WTC11 (cell line): ENCODE measurements at regions of chr2 and their contacts with region 1.

Region 1: DNA sequence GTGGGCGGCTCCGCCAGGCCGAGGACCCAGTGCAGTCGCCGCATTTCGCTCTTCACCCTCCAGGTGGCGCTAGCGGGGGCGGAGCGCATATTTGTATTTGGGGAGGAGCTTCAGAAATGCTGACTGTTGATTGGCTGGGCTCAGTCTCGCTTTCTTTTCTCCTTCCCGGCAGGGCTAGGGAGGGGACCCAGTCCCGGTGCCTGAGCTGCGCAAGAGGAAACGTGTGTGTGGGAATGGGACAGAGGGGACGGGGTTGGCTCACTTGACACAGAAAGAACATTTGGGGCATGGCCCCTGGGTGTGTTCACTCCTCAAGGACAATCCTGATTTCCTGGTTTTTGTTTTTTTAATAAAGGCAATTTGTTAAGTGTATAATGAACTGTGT is 20.3 kb upstream of the DNMT3A start:
- DNase-seq: peak; percentile 98
- ATAC-seq: peak; percentile 97
- H3K4me3 Mint-ChIP-seq: peak overlapping the region; percentile 56
- H3K27ac Mint-ChIP-seq: no peak overlapping the region
- H3K4me1 Mint-ChIP-seq: peaks cover 10% of the 10 kb centered on the region
- H3K27me3 Mint-ChIP-seq: peaks cover 68% of the 10 kb centered on the region
- CTCF ChIP-seq: peak; percentile 85

Region 2: GRCh38 chr2:25159949-25160348 is 202.1 kb before region 1 on chr2:
- CTCF ChIA-PET with region 1: no interaction called
- POLR2A ChIA-PET with region 1: no interaction called
- DNase-seq: peak; percentile 63
- ATAC-seq: peak; percentile 94
- H3K4me3 Mint-ChIP-seq: no peak overlapping the region
- H3K27ac Mint-ChIP-seq: peak overlapping the region; percentile 10; the same call in 1 of the 2 replicates
- H3K4me1 Mint-ChIP-seq: peaks cover 13% of the 10 kb centered on the region
- H3K27me3 Mint-ChIP-seq: peaks cover 1% of the 10 kb centered on the region
- CTCF ChIP-seq: no peak

Region 3: DNA sequence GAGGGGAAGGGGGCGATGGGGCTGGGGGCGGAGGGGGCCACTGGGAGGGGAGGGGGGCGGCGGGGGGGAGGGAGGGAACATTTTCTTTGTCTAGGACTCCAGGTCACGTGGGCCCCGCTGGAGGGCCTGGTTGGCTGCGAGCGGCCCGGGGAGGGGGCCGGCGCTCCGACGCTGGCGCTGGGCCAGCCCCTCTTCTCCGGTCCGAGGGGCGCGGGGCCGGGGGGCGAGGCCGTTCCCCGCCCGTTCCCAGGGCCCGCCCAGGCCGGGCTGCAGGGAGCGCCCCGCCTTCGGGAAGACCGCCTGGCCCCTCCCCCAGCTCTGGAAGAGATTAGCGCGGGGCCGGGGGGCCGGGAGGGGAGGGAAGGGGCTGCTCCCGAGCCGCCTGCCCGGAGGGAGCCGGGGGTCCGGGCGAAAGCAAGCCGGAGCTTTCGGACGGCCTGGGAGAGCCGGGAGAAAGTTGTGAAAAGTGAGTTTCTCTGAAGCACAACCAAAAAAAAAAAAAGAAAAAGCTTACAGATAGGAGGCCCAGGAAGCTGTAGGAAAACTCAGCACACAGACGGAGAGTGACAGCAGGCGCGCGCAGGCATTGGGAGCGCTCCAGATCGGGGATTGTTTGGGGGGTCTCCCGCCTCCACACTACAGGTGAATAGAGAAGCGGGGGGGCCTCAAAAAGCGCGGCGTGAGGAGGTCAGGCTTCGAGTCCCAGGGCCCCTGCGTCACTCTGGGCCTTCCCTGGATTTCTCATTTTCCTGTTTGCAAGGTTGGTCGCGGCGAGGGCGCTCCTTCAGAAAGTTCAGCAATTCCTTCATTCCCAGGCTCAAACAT is 109.5 kb before region 1 on chr2:
- CTCF ChIA-PET with region 1: interaction called, 12 read pairs
- POLR2A ChIA-PET with region 1: no interaction called
- DNase-seq: peak; percentile 92
- ATAC-seq: peak; percentile 93
- H3K4me3 Mint-ChIP-seq: peak overlapping the region; percentile 82
- H3K27ac Mint-ChIP-seq: peak overlapping the region; percentile 55
- H3K4me1 Mint-ChIP-seq: peaks cover 58% of the 10 kb centered on the region
- H3K27me3 Mint-ChIP-seq: no peaks in the 10 kb centered on the region; the same call in 1 of the 2 replicates
- CTCF ChIP-seq: no peak

Region 4: DNA sequence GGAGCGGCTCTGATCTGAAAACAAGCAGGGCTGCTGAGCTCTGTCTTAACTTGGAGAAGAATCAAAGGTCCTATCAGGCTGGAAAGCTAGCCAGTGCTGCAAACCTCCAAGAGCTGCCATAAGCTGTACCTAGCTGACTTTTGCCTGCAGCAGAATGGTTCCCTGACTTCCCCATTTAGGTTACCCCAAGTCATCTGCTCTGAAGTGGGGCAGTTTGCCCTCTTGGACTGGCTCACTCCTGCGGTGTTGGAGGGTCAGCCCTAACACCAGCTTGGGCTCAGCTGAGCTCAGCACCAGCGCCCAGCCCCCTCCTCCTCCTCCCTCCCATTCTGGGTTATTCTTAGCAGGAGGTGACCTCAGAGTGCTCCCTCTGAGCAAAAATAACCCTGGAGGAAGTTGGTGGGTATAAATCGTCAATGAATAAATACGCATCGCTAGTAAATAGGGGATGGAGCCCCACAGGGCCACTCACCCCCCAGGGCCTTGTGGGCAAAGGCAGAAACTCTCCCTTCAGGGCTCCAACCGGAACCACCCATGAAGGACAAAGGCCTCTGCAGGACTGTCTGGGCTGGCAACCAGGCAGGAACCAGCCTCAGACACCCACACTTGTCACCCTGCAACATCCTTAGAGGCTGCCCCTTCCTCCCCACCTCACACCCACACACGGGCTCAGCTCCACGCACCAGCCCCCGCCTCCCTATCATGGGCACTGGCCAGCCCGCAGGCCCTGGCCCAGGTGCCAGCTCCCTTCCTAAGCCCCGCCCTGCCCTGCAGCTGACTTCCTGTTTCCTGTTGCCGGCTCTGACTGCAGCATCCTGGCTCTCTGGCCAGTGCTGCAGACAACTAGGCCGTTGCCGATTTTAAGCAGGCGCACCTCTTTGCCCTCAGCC is 67.2 kb before region 1 on chr2:
- CTCF ChIA-PET with region 1: interaction called, 12 read pairs
- POLR2A ChIA-PET with region 1: no interaction called
- DNase-seq: no peak
- ATAC-seq: peak; percentile 64
- H3K4me3 Mint-ChIP-seq: no peak overlapping the region
- H3K27ac Mint-ChIP-seq: 0 out of 2 replicates have a peak overlapping the region, but pooled peaks have one; percentile 65
- H3K4me1 Mint-ChIP-seq: peaks cover 26% of the 10 kb centered on the region
- H3K27me3 Mint-ChIP-seq: no peaks in the 10 kb centered on the region
- CTCF ChIP-seq: no peak

Region 5: DNA sequence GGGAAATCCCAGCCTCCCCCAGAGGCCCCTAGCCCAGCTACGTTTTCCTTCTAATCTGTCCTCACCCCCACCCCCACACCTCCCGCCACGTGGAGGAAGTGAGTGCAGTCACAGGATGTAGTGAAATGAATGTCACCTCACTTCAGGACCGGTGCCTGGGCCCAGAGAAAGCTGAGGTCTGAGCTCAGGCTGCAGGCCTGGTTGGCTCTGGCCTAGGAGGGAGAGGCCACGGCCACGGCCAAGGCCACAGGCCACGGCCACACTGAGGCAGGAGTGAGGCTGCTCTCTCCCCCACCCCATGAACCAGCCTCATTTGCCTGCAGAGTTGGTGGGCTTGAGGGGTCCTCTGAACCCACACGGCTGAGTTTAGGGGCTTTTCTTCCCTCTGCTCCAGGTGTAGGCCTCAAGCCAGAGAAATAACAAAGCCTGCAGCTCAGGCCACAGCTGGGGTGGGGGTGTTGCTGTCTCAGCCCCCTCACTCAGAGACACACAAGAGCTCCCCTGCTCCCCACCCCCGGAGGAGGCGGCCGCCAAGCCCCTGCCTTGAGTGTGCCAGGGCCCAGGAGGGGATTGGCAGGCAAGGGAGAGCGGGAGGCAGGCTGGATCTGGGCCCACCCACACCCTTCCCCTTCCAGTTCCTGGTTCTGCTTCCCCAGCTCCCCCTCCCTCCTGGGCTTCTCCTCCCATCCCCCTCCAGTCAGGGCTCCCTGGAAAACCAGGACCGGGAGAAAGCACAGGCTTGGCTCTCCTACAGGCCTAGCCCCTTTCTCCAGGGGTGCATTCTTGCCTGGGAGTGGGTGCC is 47.3 kb before region 1 on chr2:
- CTCF ChIA-PET with region 1: interaction called, 53 read pairs
- POLR2A ChIA-PET with region 1: no interaction called
- DNase-seq: peak; percentile 80
- ATAC-seq: peak; percentile 79
- H3K4me3 Mint-ChIP-seq: no peak overlapping the region
- H3K27ac Mint-ChIP-seq: peak overlapping the region; percentile 83; the same call in 1 of the 2 replicates
- H3K4me1 Mint-ChIP-seq: peaks cover 54% of the 10 kb centered on the region
- H3K27me3 Mint-ChIP-seq: no peaks in the 10 kb centered on the region
- CTCF ChIP-seq: no peak

Region 6: DNA sequence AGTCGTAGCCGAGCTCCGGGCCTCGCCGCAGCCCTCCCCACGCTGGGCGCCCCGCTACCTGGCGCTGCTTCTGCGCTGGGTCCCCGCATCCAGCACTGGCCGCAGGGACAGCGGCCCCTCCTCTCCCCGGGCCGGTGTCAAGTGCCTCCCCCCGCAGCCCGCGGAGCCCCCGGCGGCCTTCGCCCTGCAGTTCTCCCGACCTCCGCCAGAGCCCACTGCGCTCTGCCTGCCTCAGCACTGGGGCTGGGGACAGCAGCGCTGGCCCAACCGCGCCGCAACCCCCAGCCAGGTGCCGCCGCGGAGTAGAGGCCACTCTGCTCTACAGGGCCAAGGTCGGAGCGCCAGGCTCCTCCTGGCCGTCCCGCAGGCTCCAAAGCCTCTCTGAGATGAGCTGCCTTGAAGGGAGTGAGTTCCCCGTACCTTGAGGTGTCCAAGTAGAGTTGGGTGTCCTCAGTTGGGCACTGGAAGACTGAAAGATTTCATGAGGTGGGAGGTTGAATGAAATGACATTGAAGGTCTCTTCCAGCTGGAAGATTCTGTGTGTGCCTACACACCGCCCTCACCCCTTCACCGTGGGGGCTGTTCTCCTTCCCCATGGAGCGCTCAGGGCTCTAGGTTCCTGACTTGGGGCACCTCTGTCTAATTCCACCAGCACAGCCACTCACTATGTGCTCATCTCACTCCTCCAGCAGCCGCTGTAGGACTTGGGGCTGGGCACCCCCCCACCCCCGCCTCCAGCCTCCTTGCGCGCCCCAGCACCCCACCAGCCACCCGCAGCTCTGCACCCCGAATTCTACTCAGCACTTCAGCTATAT is 19.5 kb before region 1 on chr2:
- CTCF ChIA-PET with region 1: interaction called, 74 read pairs
- POLR2A ChIA-PET with region 1: interaction called, 3 read pairs
- DNase-seq: peak; percentile 95
- ATAC-seq: peak; percentile 83
- H3K4me3 Mint-ChIP-seq: peak overlapping the region; percentile 65
- H3K27ac Mint-ChIP-seq: no peak overlapping the region
- H3K4me1 Mint-ChIP-seq: peaks cover 29% of the 10 kb centered on the region
- H3K27me3 Mint-ChIP-seq: peaks cover 28% of the 10 kb centered on the region
- CTCF ChIP-seq: peak; percentile 93

Region 7: DNA sequence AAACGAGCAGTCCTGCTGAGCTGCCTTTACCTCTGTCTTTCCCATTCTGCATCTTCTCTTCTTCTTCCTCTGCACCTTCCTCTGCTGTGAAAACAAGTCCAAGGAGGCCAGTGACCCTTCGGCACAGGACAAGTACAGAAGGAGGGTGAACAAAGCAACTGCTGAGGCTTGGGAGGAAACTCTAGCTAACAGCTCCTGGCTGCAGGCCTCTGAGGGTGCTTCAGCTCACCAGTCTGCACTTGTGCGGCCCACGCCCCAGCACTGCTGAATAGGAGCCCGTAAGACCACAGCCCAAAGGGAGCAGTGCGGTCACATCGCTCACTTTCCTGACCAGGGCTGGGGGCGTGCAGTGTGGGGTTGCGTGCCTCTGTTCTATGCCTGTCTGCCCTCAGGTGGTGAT is 21.8 kb after region 1 on chr2:
- CTCF ChIA-PET with region 1: interaction called, 20 read pairs
- POLR2A ChIA-PET with region 1: no interaction called
- DNase-seq: no peak
- ATAC-seq: no peak
- H3K4me3 Mint-ChIP-seq: no peak overlapping the region
- H3K27ac Mint-ChIP-seq: peak overlapping the region; percentile 42; the same call in 1 of the 2 replicates
- H3K4me1 Mint-ChIP-seq: peaks cover 12% of the 10 kb centered on the region
- H3K27me3 Mint-ChIP-seq: peaks cover 4% of the 10 kb centered on the region
- CTCF ChIP-seq: no peak

Region 8: DNA sequence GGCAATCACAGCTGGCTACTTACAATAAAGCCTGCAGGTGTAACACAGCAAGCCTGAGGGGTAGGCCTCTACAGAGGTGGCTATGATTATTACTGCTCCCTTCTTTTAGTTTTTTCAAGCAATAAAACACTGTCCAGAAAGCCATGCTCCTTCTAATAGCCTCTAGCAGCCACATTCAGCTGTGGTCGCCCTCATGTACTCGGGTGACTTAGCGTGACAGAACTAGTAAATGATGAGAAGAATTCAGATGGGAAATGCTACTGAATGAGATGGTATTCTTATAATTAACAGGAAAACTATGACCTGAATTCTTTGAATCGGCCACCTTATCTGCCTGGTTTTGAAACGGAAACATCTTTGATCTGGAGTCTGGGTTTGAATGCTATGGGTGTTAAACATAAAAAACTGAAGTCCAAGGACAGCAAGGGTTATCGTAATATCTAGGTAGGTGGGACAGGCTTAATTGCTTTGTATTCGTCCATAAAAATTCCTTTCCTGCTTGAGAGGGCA is 118.5 kb after region 1 on chr2:
- CTCF ChIA-PET with region 1: interaction called, 12 read pairs
- POLR2A ChIA-PET with region 1: no interaction called
- DNase-seq: no peak
- ATAC-seq: no peak
- H3K4me3 Mint-ChIP-seq: no peak overlapping the region
- H3K27ac Mint-ChIP-seq: no peak overlapping the region
- H3K4me1 Mint-ChIP-seq: no peaks in the 10 kb centered on the region
- H3K27me3 Mint-ChIP-seq: no peaks in the 10 kb centered on the region
- CTCF ChIP-seq: no peak